ENCODE measurements at regions of chr6 and their contacts with region 1.

Region 1: GRCh38 chr6:225121-225721 is 67.1 kb upstream of the DUSP22 start:
- DNase-seq: peak; percentile 63
- H3K4me3 Mint-ChIP-seq: peak overlapping the region; percentile 65
- H3K27ac Mint-ChIP-seq: peak overlapping the region; percentile 96
- H3K4me1 Mint-ChIP-seq: peaks cover 89% of the 10 kb centered on the region
- H3K27me3 Mint-ChIP-seq: no peaks in the 10 kb centered on the region

Region 2: GRCh38 chr6:235763-236360 is 10.6 kb after region 1 on chr6:
- intact Hi-C with region 1: loop called (anchors 1 kb)
- DNase-seq: peak; percentile 41
- H3K4me3 Mint-ChIP-seq: peak overlapping the region; percentile 56
- H3K27ac Mint-ChIP-seq: peak overlapping the region; percentile 88
- H3K4me1 Mint-ChIP-seq: peaks cover 57% of the 10 kb centered on the region
- H3K27me3 Mint-ChIP-seq: no peaks in the 10 kb centered on the region

Region 3: DNA sequence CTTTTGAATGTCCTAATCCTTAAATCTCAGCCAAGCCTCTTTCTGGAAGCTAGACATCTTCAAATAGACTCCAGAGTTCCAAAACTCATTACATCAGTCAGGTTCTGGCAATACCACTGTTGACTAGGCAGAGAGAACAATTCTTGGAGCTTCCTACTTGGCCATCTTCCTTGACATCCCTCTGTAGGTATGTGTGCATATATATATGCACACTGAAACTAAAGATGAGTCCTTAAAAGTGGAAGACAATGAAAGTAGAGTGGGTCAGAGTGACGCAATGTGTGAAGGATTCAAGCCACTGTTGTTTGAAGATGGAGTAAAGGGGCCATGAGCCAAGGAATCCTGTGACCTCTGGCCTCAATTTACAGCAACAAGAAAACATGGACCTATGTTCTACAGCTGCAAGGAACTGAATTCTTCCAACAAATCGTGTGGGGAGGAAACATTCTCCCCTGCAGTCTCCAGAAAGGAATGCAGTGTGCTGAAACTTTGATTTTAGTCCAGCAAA is 48.4 kb after region 1 on chr6:
- intact Hi-C with region 1: loop called (anchors 2 kb)
- DNase-seq: no peak
- H3K4me3 Mint-ChIP-seq: no peak overlapping the region
- H3K27ac Mint-ChIP-seq: no peak overlapping the region
- H3K4me1 Mint-ChIP-seq: peaks cover 15% of the 10 kb centered on the region
- H3K27me3 Mint-ChIP-seq: peaks cover 4% of the 10 kb centered on the region

Region 4: GRCh38 chr6:298233-299103 is 73.2 kb after region 1 on chr6:
- intact Hi-C with region 1: no loop called
- DNase-seq: no peak
- H3K4me3 Mint-ChIP-seq: no peak overlapping the region
- H3K27ac Mint-ChIP-seq: no peak overlapping the region
- H3K4me1 Mint-ChIP-seq: peaks cover 3% of the 10 kb centered on the region
- H3K27me3 Mint-ChIP-seq: no peaks in the 10 kb centered on the region

Region 5: GRCh38 chr6:313087-313486 is 87.9 kb after region 1 on chr6:
- intact Hi-C with region 1: no loop called
- DNase-seq: no peak
- H3K4me3 Mint-ChIP-seq: no peak overlapping the region
- H3K27ac Mint-ChIP-seq: no peak overlapping the region
- H3K4me1 Mint-ChIP-seq: peaks cover 28% of the 10 kb centered on the region
- H3K27me3 Mint-ChIP-seq: no peaks in the 10 kb centered on the region

Region 6: GRCh38 chr6:336159-337019 is 111.2 kb after region 1 on chr6:
- intact Hi-C with region 1: loop called (anchors 1 kb)
- DNase-seq: no peak
- H3K4me3 Mint-ChIP-seq: peak overlapping the region; percentile 21
- H3K27ac Mint-ChIP-seq: peak overlapping the region; percentile 57
- H3K4me1 Mint-ChIP-seq: peaks cover 54% of the 10 kb centered on the region
- H3K27me3 Mint-ChIP-seq: no peaks in the 10 kb centered on the region

Region 7: DNA sequence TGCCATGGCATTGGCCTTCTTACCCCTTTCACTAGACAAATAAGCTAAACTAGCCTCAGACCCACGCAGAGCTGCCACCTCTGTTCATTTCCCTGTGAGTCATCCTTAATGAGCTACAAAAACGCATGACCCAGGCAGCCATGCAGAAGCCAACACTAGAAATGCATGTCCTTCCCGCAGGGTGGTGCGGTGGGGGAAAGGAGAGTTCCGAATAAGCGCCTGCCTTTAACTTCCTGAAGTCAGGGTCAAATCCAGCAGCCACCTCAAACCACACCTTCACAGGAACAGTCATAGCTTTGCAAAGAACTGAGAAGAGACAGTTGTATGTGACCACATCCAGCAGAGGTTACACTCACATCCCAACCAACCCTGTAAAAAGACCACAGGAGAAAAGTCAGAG is 206.8 kb after region 1 on chr6:
- intact Hi-C with region 1: loop called (anchors 1 kb)
- DNase-seq: peak; percentile 70
- H3K4me3 Mint-ChIP-seq: peak overlapping the region; percentile 61
- H3K27ac Mint-ChIP-seq: peak overlapping the region; percentile 60
- H3K4me1 Mint-ChIP-seq: peaks cover 85% of the 10 kb centered on the region
- H3K27me3 Mint-ChIP-seq: no peaks in the 10 kb centered on the region

Region 8: GRCh38 chr6:692855-693722 is 467.9 kb after region 1 on chr6 and contains the start of gene EXOC2:
- intact Hi-C with region 1: loop called (anchors 1 kb)
- DNase-seq: peak; percentile 86
- H3K4me3 Mint-ChIP-seq: peak within 1 kb of the TSS; percentile 95
- H3K27ac Mint-ChIP-seq: peak within 1 kb of the TSS; percentile 93
- H3K4me1 Mint-ChIP-seq: peaks cover 31% of the 10 kb centered on the region
- H3K27me3 Mint-ChIP-seq: no peaks in the 10 kb centered on the region
- total RNA-seq, gene EXOC2: 44.5 and 47.1 TPM in 2 replicates